ENCODE measurements at regions of chr5 and their contacts with region 1.

Region 1: DNA sequence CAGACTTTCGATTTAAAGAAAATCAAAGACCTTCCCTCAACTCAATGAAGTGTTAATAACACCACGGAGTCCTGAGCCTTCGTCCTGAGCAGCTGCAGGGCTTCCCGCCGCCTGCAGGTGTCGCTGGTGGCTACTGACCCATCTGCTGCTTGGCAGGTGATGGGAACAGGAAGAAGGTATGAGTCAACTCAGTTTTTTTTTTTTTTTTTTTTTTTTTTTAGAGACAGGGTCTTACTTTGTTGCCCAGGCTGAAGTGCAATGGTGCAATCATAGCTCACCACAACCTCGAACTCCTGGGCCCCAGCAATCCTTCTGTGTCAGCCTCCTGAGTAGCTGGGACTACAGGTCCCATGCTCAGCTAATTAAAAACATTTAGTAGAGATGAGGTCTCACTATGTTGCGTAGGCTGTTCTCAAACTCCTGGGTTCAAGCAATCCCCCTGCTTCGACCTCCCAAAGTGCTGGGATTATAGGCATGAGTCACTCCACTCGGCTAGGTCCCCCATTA is 185.7 kb upstream of the IL12B start:
- DNase-seq: peak; percentile 58 to 76
- H3K4me3 ChIP-seq: no peak overlapping the region
- H3K27ac ChIP-seq: no peak overlapping the region
- H3K4me1 ChIP-seq: peaks cover 45% of the 10 kb centered on the region
- H3K27me3 ChIP-seq: no peaks in the 10 kb centered on the region
- CTCF ChIP-seq: peak; percentile 72

Region 2: DNA sequence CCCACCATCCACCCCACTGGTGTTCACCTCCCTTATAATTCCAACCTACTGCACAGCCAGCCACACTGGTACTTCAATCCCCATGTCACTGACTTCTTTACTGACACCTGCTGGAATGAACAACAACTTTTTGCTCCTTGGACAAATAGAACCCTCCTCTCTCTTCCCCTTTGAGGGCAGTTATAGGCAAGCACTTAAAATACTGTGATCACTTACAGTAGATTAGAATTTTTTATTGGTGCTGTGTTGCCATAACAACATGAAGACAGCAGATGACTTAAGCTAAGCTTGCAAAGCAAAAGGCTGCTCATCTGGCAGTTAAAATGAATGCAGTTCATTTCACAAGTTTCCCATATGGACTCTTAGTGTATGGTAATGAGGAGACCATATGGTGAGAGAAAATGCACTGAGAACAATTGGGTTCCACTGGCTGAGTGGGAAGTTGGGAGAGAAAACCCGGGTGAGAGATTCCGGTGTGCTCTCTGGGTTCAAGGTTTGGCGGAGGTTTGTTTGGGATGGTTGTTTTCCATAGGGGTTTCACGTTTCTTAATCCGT is 790.6 kb before region 1 on chr5:
- CTCF ChIA-PET with region 1: no interaction called
- POLR2A ChIA-PET with region 1: no interaction called
- intact Hi-C with region 1: no loop called
- DNase-seq: no peak
- H3K4me3 ChIP-seq: no peak overlapping the region
- H3K27ac ChIP-seq: no peak overlapping the region
- H3K4me1 ChIP-seq: no peaks in the 10 kb centered on the region
- H3K27me3 ChIP-seq: peaks cover 14% of the 10 kb centered on the region; the same call in 1 of the 2 replicates
- CTCF ChIP-seq: no peak

Region 3: GRCh38 chr5:159286420-159287035 is 229.4 kb before region 1 on chr5:
- CTCF ChIA-PET with region 1: interaction called, 3 read pairs
- POLR2A ChIA-PET with region 1: no interaction called
- intact Hi-C with region 1: loop called (anchors 5 kb)
- DNase-seq: no peak
- H3K4me3 ChIP-seq: no peak overlapping the region
- H3K27ac ChIP-seq: no peak overlapping the region
- H3K4me1 ChIP-seq: 0 out of 2 replicates have a peak, but pooled peaks cover 5% of the 10 kb centered on the region
- H3K27me3 ChIP-seq: no peaks in the 10 kb centered on the region
- CTCF ChIP-seq: peak; percentile 68

Region 4: GRCh38 chr5:159444441-159445082 is 71.4 kb before region 1 on chr5:
- CTCF ChIA-PET with region 1: no interaction called
- POLR2A ChIA-PET with region 1: no interaction called
- intact Hi-C with region 1: loop called (anchors 1 kb)
- DNase-seq: peak; percentile 38 to 65
- H3K4me3 ChIP-seq: no peak overlapping the region
- H3K27ac ChIP-seq: no peak overlapping the region
- H3K4me1 ChIP-seq: peaks cover 9% of the 10 kb centered on the region
- H3K27me3 ChIP-seq: no peaks in the 10 kb centered on the region
- CTCF ChIP-seq: peak; percentile 74

Region 5: DNA sequence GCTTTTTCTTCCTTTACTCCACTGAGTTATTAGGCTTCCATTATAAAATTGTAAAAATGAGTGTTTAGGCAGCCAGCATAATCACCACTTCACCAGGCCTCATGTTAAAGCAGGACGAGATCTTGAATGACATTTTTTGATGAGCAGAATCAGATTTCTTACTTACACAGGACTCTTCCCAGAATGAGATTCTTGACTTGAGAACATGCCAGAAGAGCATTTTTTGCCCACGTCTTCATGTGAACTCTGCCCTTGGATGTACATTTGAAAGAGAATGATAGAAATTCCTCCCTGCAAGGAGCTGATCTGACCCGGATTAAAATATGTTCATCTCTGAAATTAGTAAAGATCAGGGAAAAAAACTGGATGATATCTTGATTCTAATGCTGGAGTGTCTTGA is 188.2 kb after region 1 on chr5:
- CTCF ChIA-PET with region 1: interaction called, 11 read pairs
- POLR2A ChIA-PET with region 1: no interaction called
- intact Hi-C with region 1: no loop called
- DNase-seq: no peak
- H3K4me3 ChIP-seq: no peak overlapping the region
- H3K27ac ChIP-seq: no peak overlapping the region
- H3K4me1 ChIP-seq: 0 out of 2 replicates have a peak, but pooled peaks cover 8% of the 10 kb centered on the region
- H3K27me3 ChIP-seq: no peaks in the 10 kb centered on the region
- CTCF ChIP-seq: no peak

Region 6: DNA sequence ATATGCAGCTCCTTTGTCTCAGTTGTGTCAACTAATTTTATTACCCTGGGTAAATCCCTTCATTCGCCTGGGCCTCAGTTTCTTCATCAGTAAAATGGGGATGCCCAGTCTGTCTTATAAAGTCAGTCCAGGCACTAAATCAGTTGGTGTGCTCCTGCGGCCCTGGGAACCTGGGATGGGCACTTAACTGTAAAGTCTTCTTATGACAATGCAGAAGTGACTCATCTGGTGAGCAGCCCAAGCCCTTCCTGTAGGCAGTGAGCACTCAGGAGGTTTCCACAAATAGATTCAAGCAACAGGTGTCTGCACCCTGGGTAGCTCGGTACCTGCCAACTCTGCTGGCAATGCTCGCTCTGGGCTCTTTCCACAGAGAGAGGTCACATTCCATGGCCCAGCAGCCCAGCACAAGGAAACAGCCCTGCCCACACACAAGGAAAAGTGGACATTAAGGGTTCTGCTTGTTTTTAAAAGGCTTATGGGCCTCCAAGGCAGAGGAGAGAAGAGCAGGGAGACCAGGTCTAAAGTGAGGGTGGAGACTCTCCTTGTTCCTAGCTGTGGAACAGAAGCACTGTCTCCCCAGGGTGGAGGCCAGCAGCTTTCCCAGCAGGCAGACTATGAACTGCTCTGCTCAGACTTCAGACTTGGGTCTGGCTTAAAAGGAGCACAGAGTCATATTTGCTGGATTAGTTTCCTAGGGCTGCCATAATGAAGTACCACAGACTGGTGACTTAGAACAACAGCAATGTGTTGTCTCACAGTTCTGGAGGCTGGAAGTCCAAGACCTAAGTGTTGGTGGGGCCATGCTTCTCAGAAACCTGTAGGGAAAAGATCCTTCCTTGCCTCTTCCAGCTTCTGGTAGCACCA is 310.6 kb after region 1 on chr5:
- CTCF ChIA-PET with region 1: no interaction called
- POLR2A ChIA-PET with region 1: no interaction called
- intact Hi-C with region 1: loop called (anchors 5 kb)
- DNase-seq: peak; percentile 84 to 99
- H3K4me3 ChIP-seq: no peak overlapping the region
- H3K27ac ChIP-seq: peak overlapping the region; percentile 99
- H3K4me1 ChIP-seq: peaks cover 64% of the 10 kb centered on the region
- H3K27me3 ChIP-seq: no peaks in the 10 kb centered on the region
- CTCF ChIP-seq: no peak

Measured in PC-9 (cell line).